HepG2 (cell line): ENCODE measurements at regions of chr18 and their contacts with region 1.

Region 1: GRCh38 chr18:22983175-22983574 is 50.0 kb downstream of the RBBP8 start:
- DNase-seq: peak; percentile 30
- ATAC-seq: no peak
- H3K4me3 ChIP-seq: no peak overlapping the region
- H3K27ac ChIP-seq: no peak overlapping the region
- H3K4me1 ChIP-seq: no peaks in the 10 kb centered on the region
- H3K27me3 ChIP-seq: no peaks in the 10 kb centered on the region
- CTCF ChIP-seq: peak; percentile 39; the same call in 1 of the 2 replicates
- EP300 ChIP-seq: no peak
- POLR2A ChIP-seq: no peak
- RAD21 ChIP-seq: no peak

Region 2: GRCh38 chr18:22796069-22796468 is 187.1 kb before region 1 on chr18:
- CTCF ChIA-PET with region 1: interaction called, 7 read pairs
- POLR2A ChIA-PET with region 1: no interaction called
- in situ Hi-C with region 1: no loop called
- intact Hi-C with region 1: loop called (anchors 5 kb)
- DNase-seq: no peak
- ATAC-seq: no peak
- H3K4me3 ChIP-seq: no peak overlapping the region
- H3K27ac ChIP-seq: no peak overlapping the region
- H3K4me1 ChIP-seq: no peaks in the 10 kb centered on the region
- H3K27me3 ChIP-seq: no peaks in the 10 kb centered on the region; a peak in 1 of 5 replicates
- CTCF ChIP-seq: no peak
- EP300 ChIP-seq: no peak
- POLR2A ChIP-seq: no peak
- RAD21 ChIP-seq: no peak

Region 3: GRCh38 chr18:22813648-22814328 is 169.4 kb before region 1 on chr18:
- CTCF ChIA-PET with region 1: interaction called, 11 read pairs
- POLR2A ChIA-PET with region 1: no interaction called
- in situ Hi-C with region 1: loop called (anchors 10 kb)
- intact Hi-C with region 1: loop called (anchors 1 kb)
- DNase-seq: peak; percentile 21
- ATAC-seq: peak; percentile 55
- H3K4me3 ChIP-seq: no peak overlapping the region
- H3K27ac ChIP-seq: no peak overlapping the region
- H3K4me1 ChIP-seq: peaks cover 10% of the 10 kb centered on the region
- H3K27me3 ChIP-seq: no peaks in the 10 kb centered on the region
- CTCF ChIP-seq: peak; percentile 76
- EP300 ChIP-seq: no peak
- POLR2A ChIP-seq: no peak
- RAD21 ChIP-seq: peak; percentile 39; the same call in 1 of the 2 replicates

Region 4: GRCh38 chr18:22846088-22846683 is 137.0 kb before region 1 on chr18:
- CTCF ChIA-PET with region 1: interaction called, 5 read pairs
- POLR2A ChIA-PET with region 1: no interaction called
- in situ Hi-C with region 1: no loop called
- intact Hi-C with region 1: loop called (anchors 1 kb)
- DNase-seq: peak; percentile 21
- ATAC-seq: no peak
- H3K4me3 ChIP-seq: no peak overlapping the region
- H3K27ac ChIP-seq: no peak overlapping the region
- H3K4me1 ChIP-seq: no peaks in the 10 kb centered on the region
- H3K27me3 ChIP-seq: no peaks in the 10 kb centered on the region
- CTCF ChIP-seq: peak; percentile 43; the same call in 1 of the 2 replicates
- EP300 ChIP-seq: no peak
- POLR2A ChIP-seq: no peak
- RAD21 ChIP-seq: no peak

Region 5: GRCh38 chr18:22933206-22933957 is 49.8 kb before region 1 on chr18 and contains the start of gene RBBP8:
- CTCF ChIA-PET with region 1: interaction called, 8 read pairs
- POLR2A ChIA-PET with region 1: interaction called, 3 read pairs
- in situ Hi-C with region 1: no loop called
- intact Hi-C with region 1: loop called (anchors 1 kb)
- DNase-seq: peak; percentile 73
- ATAC-seq: peak; percentile 94
- H3K4me3 ChIP-seq: peak within 1 kb of the TSS; percentile 80 to 90 (median 88)
- H3K27ac ChIP-seq: peak within 1 kb of the TSS; percentile 92
- H3K4me1 ChIP-seq: peaks cover 39% of the 10 kb centered on the region
- H3K27me3 ChIP-seq: no peaks in the 10 kb centered on the region
- CTCF ChIP-seq: 0 out of 2 replicates have a peak, but pooled peaks have one; percentile 20
- EP300 ChIP-seq: no peak
- POLR2A ChIP-seq: peak; percentile 72 to 83
- RAD21 ChIP-seq: no peak; the same call in 1 of the 2 replicates
- total RNA-seq, gene RBBP8: 47.4 and 68.5 TPM in 2 replicates

Region 6: DNA sequence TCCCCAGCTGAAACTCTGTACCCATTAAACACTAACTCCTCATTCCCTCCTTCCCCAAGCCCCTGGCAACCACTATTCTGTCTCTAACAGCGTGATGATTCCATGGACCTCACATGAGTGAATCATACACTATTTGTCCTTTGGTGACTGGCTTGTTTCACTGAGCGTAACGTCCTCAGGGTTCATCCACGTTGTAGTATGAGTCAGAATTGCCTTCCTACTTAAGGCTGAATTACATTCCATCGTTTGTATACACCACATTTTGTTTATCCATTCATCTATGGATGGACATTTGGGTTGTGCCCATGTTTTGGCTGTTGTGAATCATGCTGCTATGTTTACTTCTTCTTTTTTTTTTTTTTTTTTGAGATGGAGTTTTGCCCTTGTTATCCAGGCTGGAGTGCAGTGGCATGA is 132.5 kb after region 1 on chr18:
- CTCF ChIA-PET with region 1: no interaction called
- POLR2A ChIA-PET with region 1: no interaction called
- in situ Hi-C with region 1: no loop called
- intact Hi-C with region 1: no loop called
- DNase-seq: peak; percentile 74
- ATAC-seq: peak; percentile 88
- H3K4me3 ChIP-seq: no peak overlapping the region
- H3K27ac ChIP-seq: no peak overlapping the region
- H3K4me1 ChIP-seq: peaks cover 57% of the 10 kb centered on the region
- H3K27me3 ChIP-seq: no peaks in the 10 kb centered on the region; a peak in 1 of 5 replicates
- CTCF ChIP-seq: no peak
- EP300 ChIP-seq: peak in 1 of 2 experiments; percentile 6; a peak in 1 of 4 replicates
- POLR2A ChIP-seq: no peak
- RAD21 ChIP-seq: no peak